Endothelial cell of umbilical vein (primary cell): ENCODE measurements at regions of chr11 and their contacts with region 1.

Region 1: DNA sequence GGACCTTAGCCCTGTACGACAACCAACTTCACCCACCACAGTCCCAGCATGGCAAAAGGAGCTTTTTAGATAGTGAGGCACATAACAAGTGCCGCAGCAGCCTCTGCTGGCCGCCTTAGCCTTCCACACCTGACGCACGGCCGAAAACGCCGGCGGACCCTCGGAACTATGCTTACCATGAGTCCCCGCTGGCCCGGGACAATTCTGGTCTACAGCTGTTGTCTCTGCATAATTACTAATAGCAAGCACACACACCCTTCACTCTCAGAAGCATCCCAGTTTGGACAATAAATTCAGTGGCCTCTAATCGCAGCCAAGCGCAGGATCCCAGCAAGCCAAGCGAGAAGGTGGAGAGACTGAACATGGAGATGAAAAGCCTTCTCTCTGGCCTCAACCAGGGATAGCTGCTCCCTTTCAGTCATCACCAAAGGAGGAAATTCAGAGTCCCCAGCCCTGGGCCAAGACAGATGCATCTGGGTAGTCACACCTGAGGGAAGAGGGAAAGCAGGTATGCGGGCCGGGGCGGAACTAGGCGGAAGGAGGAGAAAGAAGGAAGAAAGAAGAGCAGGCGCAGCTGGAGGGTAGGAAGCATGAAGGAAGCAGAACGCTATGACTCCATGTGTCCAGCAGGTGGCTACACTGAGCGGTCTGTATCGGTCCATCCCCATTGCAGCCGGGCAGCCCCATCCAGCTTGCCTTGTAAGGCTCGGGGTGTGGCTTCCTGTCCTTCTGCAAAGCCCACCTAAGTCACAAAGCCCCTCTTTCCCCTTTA is 40.3 kb downstream of the BUD13 start:
- DNase-seq: peak; percentile 40
- H3K4me3 ChIP-seq: no peak overlapping the region
- H3K27ac ChIP-seq: no peak overlapping the region
- H3K4me1 ChIP-seq: no peaks in the 10 kb centered on the region
- H3K27me3 ChIP-seq: peaks cover 8 to 15% of the 10 kb centered on the region in 2 experiments
- CTCF ChIP-seq: peak; percentile 78 to 96
- POLR2A ChIP-seq: no peak

Region 2: GRCh38 chr11:116721988-116722387 is 10.5 kb before region 1 on chr11:
- CTCF ChIA-PET with region 1: interaction called, 14 read pairs
- POLR2A ChIA-PET with region 1: no interaction called
- dilution Hi-C with region 1: no loop called
- intact Hi-C with region 1: no loop called
- DNase-seq: no peak
- H3K4me3 ChIP-seq: no peak overlapping the region
- H3K27ac ChIP-seq: no peak overlapping the region
- H3K4me1 ChIP-seq: no peaks in the 10 kb centered on the region
- H3K27me3 ChIP-seq: peaks cover 0 to 2% of the 10 kb centered on the region in 2 experiments
- CTCF ChIP-seq: no peak
- POLR2A ChIP-seq: no peak

Region 3: DNA sequence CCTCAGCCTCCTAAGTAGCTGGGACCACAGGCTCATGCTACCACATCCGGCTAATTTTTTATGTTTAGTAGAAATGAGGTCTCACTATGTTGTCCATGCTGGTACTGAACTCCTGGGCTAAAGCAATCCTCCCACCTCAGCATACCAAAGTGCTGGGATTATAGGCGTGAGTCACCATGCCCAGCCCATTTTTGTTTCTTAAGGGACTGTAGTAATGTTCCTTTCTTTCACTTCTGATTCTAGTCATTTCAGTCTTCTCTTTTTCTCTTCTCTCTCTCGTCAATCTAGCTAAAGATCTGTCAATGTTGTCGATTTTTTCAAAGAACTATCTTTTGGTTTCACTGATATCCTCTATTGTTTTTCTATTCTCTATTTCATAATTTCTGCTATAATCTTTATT is 215.9 kb after region 1 on chr11:
- CTCF ChIA-PET with region 1: no interaction called
- POLR2A ChIA-PET with region 1: no interaction called
- dilution Hi-C with region 1: no loop called
- intact Hi-C with region 1: no loop called
- DNase-seq: no peak
- H3K4me3 ChIP-seq: no peak overlapping the region
- H3K27ac ChIP-seq: no peak overlapping the region
- H3K4me1 ChIP-seq: peaks cover 8% of the 10 kb centered on the region
- H3K27me3 ChIP-seq: no peaks in the 10 kb centered on the region
- CTCF ChIP-seq: no peak
- POLR2A ChIP-seq: no peak